CD4-positive, alpha-beta T cell (primary cell): ENCODE measurements at regions of chr9 and their contacts with region 1.

Region 1: DNA sequence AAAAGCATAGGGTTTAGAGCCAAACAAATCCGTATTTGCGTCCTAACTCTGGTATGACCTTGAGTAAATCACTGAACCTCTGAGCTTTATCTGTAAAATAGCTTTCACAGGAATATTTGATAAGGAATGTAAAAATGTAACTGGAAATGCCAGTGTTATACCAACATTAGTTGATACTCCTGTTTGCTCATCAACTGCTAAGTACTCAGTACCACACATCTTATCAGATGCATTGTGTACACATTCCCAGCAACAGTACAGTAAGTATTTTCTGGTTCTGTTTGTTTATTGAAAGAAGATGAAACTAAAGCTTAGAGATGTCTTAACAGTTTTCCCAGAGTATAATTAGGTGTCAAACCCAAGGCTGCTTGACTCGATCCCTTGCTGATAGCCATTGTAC is 21.5 kb downstream of the SNAPC3 start:
- DNase-seq: no peak
- ATAC-seq: no peak
- H3K4me3 ChIP-seq: no peak overlapping the region
- H3K4me3 Mint-ChIP-seq: no peak overlapping the region
- H3K27ac ChIP-seq: no peak overlapping the region
- H3K27ac Mint-ChIP-seq: no peak overlapping the region
- H3K4me1 ChIP-seq: no peaks in the 10 kb centered on the region
- H3K4me1 Mint-ChIP-seq: peaks cover 16% of the 10 kb centered on the region
- H3K27me3 ChIP-seq: no peaks in the 10 kb centered on the region
- H3K27me3 Mint-ChIP-seq: no peaks in the 10 kb centered on the region
- CTCF ChIP-seq: no peak

Region 2: DNA sequence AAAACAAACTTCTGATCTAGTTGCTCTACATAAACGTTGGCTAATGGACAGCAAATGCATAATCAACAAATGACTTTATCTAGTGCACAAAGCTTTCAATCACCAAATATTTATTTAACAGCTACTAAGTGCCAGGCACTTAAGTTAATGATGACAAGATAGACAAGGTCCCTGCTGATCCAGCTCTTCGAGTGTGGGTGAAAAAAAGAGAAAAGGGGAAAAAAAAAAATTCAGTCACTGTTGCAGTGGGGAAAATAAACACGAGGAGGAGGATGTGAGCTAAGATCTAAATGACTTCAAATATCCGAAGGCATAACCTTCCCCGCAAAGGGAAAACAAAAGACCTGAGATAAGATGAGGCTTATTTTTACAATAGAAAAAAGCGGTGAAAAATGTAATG is 57.0 kb after region 1 on chr9:
- CTCF ChIA-PET with region 1: no interaction called
- POLR2A ChIA-PET with region 1: no interaction called
- intact Hi-C with region 1: loop called in 1 of 2 experiments (anchors 5 kb)
- DNase-seq: peak in 2 of 14 experiments; percentile 33 to 42
- ATAC-seq: peak; percentile 45
- H3K4me3 ChIP-seq: no peak overlapping the region
- H3K4me3 Mint-ChIP-seq: peak overlapping the region; percentile 46
- H3K27ac ChIP-seq: no peak overlapping the region
- H3K27ac Mint-ChIP-seq: peak overlapping the region; percentile 67
- H3K4me1 ChIP-seq: peaks cover 27% of the 10 kb centered on the region
- H3K4me1 Mint-ChIP-seq: peaks cover 75% of the 10 kb centered on the region
- H3K27me3 ChIP-seq: no peaks in the 10 kb centered on the region
- H3K27me3 Mint-ChIP-seq: no peaks in the 10 kb centered on the region
- CTCF ChIP-seq: no peak